ENCODE measurements at regions of chr4 and their contacts with region 1.

Region 1: GRCh38 chr4:114417214-114417613 is 181.4 kb upstream of the UGT8 start:
- DNase-seq: no peak
- H3K4me3 ChIP-seq: no peak overlapping the region
- CTCF ChIP-seq: no peak
- POLR2A ChIP-seq: no peak

Region 2: DNA sequence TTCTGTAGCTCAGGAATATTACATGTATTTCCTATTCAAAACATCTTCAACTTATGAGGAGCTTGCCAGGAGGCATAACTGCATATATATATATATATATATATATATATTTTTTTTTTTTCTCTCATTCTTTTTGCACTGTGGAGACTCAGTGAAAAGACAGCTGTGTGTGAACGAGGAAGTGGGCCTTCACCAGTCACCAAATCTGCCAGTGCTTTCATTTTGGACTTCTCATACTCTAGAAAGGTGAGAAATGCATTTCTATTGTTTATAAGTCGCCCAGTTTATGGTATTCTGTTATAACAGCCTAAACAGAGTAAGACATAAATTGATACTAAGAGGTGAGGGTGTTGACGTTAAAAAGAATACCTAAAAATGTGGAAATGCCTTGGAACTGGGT is 1957.6 kb after region 1 on chr4:
- intact Hi-C with region 1: loop called (anchors 5 kb)
- DNase-seq: no peak
- H3K4me3 ChIP-seq: no peak overlapping the region
- CTCF ChIP-seq: no peak
- POLR2A ChIP-seq: no peak